GM13976 (cell line): ENCODE measurements at regions of chr7 and their contacts with region 1.

Region 1: DNA sequence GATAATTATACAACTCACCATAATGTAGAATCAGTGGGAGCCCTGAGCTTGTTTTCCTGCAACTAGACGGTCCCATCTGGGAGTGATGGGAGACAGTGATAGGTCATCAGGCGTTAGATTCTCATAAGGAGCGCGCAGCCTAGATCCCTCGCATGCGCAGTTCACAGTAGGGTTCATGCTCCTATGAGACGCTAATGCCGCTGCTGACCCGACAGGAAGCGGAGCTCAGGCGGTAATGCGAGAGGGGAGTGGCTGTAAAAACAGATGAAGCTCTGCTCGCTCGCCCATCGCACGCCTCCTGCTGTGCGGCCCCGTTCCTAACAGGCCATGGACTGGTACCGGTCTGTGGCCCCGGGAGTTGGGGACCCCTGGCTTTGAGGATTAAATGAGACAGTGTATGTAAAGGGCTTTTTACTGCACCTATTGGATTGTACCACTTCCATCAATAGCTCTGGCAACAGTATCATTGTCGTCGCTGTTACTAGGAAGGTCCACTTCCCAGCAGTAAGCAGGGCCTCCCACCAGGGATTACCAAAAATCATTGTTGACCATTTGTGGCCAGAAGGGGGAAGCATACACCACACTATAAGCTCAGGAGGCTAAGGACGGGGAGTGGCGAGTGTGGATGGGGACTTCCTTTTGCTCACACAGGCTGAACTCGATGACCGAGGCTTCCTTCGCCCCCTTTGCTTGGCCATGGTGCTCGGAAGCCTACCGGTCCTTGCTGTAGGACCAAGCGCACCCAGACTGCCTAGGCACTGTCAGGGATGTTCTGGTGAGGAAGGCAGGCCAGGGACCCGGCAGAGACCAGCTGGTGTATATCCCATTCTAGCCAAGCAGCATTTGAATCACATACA is 26.4 kb downstream of the AKR1B1 start:
- DNase-seq: peak; percentile 87
- CTCF ChIP-seq: peak; percentile 60

Region 2: DNA sequence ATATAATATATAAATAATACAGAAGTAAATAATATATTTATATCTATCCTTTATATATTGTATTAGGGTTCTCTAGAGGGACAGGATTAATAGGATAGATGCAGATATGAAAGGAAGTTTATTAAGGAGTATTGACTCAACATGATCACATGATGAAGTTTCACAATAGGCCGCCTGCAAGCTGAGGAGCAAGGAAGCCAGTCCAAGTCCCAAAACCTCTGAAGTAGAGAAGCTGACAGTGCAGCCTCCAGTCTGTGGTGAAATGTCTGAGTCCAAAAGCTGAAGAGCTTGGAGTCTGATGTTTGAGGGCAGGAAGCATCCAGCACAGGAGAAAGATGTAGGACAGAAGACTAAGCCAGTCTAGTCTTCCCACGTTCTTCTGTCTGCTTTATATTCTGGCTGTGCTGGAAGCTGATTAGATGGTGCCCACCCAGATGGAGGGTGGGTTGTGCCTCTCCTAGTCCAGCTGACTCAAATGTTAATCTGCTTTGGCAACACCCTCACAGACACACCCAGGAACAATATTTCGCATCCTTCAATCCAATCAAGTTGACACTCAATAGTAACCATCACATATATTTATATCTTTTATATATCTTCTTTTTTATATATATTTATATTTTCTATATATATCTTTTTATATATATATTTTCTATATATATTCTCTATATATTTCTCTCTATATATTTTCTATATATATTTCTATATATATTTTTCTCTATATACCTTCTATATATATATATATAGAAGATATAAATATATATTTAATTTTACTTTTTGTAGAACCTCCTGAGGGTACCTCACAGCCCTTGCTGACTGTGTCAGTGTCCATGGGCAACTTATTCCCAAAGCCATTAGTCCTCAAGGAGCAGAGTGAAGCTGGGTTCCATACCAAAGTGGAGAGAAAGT is 70.2 kb after region 1 on chr7:
- in situ Hi-C with region 1: loop called (anchors 10 kb)
- DNase-seq: no peak
- CTCF ChIP-seq: no peak

Region 3: DNA sequence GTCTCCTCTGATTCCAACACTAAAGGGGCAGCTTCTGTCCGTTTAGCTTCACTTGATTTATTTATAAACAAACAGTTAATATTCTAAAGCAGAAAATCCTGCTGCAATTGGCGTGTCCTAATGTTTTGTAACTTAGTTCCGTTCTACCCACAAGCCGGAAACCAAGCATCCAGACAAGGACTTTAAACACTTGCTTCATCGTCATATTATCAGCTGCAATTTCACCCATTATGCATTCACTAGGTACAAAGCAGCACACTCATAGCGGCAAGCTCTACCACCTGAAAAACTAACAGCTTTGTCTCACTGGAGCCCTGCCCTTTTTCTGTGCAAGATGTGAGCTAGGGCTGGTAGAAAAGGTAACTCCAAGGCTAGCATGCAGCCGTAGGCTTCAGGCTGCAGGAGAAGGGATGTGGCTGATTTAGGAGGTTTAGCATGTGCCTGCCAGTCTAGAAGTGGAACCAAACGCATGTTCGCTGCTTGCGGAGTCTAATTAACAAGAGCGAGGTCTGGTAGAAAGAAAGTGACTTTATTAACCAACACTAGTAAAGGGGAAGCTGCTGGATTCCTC is 170.4 kb after region 1 on chr7:
- in situ Hi-C with region 1: loop called (anchors 5 kb)
- DNase-seq: no peak
- CTCF ChIP-seq: no peak

Region 4: GRCh38 chr7:134654104-134654775 is 221.7 kb after region 1 on chr7:
- in situ Hi-C with region 1: no loop called
- DNase-seq: no peak
- CTCF ChIP-seq: no peak